ENCODE measurements at regions of chr3 and their contacts with region 1.

Region 1: GRCh38 chr3:155870133-155870944 is at the start of gene GMPS:
- DNase-seq: peak; percentile 93 to 96 (median 94)
- H3K4me3 ChIP-seq: peak within 1 kb of the TSS; percentile 75
- H3K27ac ChIP-seq: peak within 1 kb of the TSS; percentile 96 to 97
- H3K4me1 ChIP-seq: peaks cover 2% of the 10 kb centered on the region
- H3K27me3 ChIP-seq: no peaks in the 10 kb centered on the region
- CTCF ChIP-seq: peak; percentile 35 to 65 (median 40)
- EP300 ChIP-seq: no peak
- POLR2A ChIP-seq: peak; percentile 65
- total RNA-seq, gene GMPS: 22.2 to 62.1 (median 48.9) TPM

Region 2: DNA sequence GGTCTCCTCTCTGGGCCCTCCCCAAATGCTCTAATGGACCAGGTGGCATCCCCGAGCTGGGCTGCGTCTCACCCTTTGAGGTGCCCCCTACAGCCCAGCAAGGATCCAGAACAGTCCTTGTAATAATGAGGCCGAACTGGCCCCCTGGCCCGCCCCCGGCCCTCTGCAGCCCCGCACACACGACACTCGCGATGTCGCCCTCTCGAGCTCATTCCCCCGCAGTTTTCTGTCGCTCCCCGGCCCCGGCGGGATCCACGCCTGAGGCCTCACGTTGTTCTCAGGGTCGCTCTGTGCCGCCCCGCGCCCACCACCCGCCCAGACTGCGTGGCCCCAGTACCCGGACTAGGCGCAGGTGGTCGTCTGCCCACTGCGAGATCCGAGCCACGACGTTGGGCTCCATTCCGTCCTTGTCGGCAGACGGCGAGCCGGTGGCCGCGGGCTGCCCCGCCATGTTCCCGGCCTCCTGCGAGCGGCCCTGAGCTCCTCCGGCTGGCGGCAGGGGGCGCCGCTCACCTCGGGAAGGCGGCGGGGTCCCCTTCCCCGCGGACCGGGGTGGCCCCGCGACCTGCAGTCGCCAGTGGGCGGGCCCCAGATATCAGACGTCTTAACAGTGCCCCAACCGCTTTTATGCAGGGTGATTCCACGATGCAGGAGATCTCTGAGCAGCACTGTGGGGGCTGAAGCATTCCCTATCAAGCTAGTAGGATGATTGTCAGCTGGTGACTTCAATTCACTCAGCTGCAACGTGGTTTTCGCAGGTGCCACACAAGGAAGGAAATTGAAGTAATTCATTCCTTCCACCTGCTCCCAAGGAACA is 64.3 kb before region 1 on chr3 and contains the start of gene C3orf33:
- intact Hi-C with region 1: loop called in 1 of 4 experiments (anchors 5 kb)
- DNase-seq: peak; percentile 54 to 78 (median 67)
- H3K4me3 ChIP-seq: peak within 1 kb of the TSS; percentile 91
- H3K27ac ChIP-seq: peak within 1 kb of the TSS; percentile 75 to 79
- H3K4me1 ChIP-seq: no peaks in the 10 kb centered on the region
- H3K27me3 ChIP-seq: no peaks in the 10 kb centered on the region
- CTCF ChIP-seq: peak; percentile 69 to 83 (median 82)
- EP300 ChIP-seq: no peak
- POLR2A ChIP-seq: no peak
- total RNA-seq, gene C3orf33: 4.5 to 7.6 (median 6.3) TPM

Region 3: DNA sequence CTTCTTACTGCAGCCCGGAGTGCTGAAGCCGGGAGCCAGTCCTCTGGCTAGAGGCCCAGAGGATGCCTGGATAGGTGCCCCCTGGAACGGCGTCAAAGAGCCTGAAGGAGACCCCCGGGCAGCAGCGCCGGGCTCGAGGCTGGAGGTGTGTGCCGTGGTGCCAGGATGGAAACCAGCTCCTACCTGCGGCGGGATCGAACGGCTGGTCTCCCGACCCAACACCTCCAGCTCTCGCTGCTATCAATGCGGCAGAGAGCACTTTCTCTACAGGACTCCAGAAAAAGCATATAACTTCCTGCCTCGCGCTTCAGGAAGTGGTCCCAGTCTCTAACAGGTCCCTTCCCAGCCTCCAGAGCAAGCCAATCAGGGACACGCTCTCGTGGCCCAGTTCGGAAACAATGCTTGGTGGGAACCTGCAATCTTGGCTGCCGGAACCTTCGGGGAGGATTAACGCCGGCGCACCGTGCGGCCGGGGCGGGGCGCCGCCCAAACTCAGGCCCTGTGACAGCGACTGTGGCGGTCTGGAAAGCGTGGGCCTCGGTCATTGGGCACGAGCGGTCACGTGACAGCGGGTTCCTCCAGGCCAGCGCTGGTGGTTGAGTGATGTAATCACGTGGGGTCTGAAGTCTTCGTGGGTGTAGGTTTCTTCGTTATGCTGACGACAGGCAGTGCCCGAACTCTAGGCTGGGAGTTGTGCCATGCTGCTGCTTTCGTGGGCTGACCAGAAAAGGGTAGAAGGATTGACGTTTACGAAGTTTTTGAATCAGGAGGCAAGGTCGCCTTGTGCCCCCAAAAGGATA is 16.0 kb before region 1 on chr3 and contains the start of gene SLC33A1:
- intact Hi-C with region 1: loop called in 1 of 4 experiments (anchors 2 kb)
- DNase-seq: peak; percentile 98 to 99 (median 99)
- H3K4me3 ChIP-seq: peak within 1 kb of the TSS; percentile 99
- H3K27ac ChIP-seq: peak within 1 kb of the TSS; percentile 3 to 86
- H3K4me1 ChIP-seq: peaks cover 20% of the 10 kb centered on the region
- H3K27me3 ChIP-seq: no peaks in the 10 kb centered on the region
- CTCF ChIP-seq: no peak
- EP300 ChIP-seq: no peak
- POLR2A ChIP-seq: peak; percentile 82
- total RNA-seq, gene SLC33A1: 18.4 to 35.4 (median 26.6) TPM

Measured in ovary (tissue), 10 donors.